Caco-2 (cell line): ENCODE measurements at regions of chr6 and their contacts with region 1.

Region 1: GRCh38 chr6:136550330-136551071 is at the start of gene MAP7:
- DNase-seq: peak; percentile 91 to 97
- H3K4me3 ChIP-seq: peak within 1 kb of the TSS; percentile 94
- H3K4me3 Mint-ChIP-seq: peak within 1 kb of the TSS; percentile 81
- H3K27ac Mint-ChIP-seq: peak within 1 kb of the TSS; percentile 83
- H3K4me1 ChIP-seq: peaks cover 8% of the 10 kb centered on the region
- H3K4me1 Mint-ChIP-seq: peaks cover 21% of the 10 kb centered on the region
- H3K27me3 ChIP-seq: no peaks in the 10 kb centered on the region
- H3K27me3 Mint-ChIP-seq: no peaks in the 10 kb centered on the region
- CTCF ChIP-seq: peak; percentile 57 to 92
- total RNA-seq, gene MAP7: 55.3 and 57.4 TPM in 2 replicates

Region 2: DNA sequence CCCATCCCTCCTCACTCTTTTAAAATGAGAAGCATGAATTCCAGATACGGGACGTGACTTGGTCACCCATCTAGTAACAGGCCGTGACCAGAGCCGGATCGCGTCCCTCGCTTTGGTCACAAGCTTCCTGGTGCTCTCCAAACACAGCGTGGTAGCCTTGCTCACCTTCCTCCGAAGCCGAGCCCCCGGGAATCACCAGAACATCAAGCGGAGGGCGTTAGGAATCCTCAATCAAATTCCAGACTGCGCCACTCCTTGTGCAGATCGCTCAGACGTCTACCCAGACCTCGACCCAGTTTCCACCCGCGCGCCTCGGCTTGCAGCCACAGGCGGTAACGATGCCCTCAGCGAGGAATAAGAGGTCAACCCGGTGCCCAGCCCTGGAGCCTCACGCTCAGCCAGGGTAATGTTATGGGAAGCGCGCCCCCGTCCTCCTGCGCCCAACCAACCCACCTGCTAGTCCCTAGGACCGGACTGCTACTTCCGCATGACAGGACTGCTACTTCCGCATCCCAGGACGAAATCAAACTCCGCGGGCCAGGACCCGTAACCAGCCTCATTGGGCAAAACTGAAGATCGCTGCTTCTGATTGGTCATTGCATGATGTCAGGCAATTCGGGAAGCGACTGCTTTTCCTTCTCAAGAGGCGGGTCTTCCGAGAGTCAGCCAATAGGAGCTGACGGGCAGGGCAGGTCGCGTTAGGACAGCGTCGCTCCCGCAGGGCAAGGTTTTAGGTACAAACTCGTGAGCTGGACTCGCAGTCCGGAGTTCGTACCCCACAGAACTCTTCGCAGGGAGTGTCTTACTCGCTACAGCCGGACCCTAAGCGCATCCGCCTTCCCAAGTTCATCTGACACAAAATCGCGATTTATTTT is 300.5 kb before region 1 on chr6 and contains the start of gene MTFR2:
- CTCF ChIA-PET with region 1: interaction called, 4 read pairs
- POLR2A ChIA-PET with region 1: interaction called, 6 read pairs
- intact Hi-C with region 1: loop called (anchors 2 kb)
- DNase-seq: peak; percentile 97 to 99
- H3K4me3 ChIP-seq: peak within 1 kb of the TSS; percentile 71
- H3K4me3 Mint-ChIP-seq: peak within 1 kb of the TSS; percentile 97
- H3K27ac Mint-ChIP-seq: peak within 1 kb of the TSS; percentile 98
- H3K4me1 ChIP-seq: peaks cover 9% of the 10 kb centered on the region; the same call in 1 of the 2 replicates
- H3K4me1 Mint-ChIP-seq: peaks cover 23% of the 10 kb centered on the region
- H3K27me3 ChIP-seq: no peaks in the 10 kb centered on the region
- H3K27me3 Mint-ChIP-seq: no peaks in the 10 kb centered on the region
- CTCF ChIP-seq: no peak
- total RNA-seq, gene MTFR2: 15.1 and 18.5 TPM in 2 replicates

Region 3: GRCh38 chr6:136317021-136317694 is 233.3 kb before region 1 on chr6:
- CTCF ChIA-PET with region 1: interaction called, 6 read pairs
- POLR2A ChIA-PET with region 1: no interaction called
- intact Hi-C with region 1: loop called (anchors 1 kb)
- DNase-seq: peak; percentile 52 to 71
- H3K4me3 ChIP-seq: no peak overlapping the region
- H3K4me3 Mint-ChIP-seq: no peak overlapping the region
- H3K27ac Mint-ChIP-seq: no peak overlapping the region
- H3K4me1 ChIP-seq: no peaks in the 10 kb centered on the region
- H3K4me1 Mint-ChIP-seq: no peaks in the 10 kb centered on the region
- H3K27me3 ChIP-seq: no peaks in the 10 kb centered on the region
- H3K27me3 Mint-ChIP-seq: no peaks in the 10 kb centered on the region
- CTCF ChIP-seq: peak; percentile 75 to 79

Region 4: GRCh38 chr6:136446579-136447182 is 103.8 kb before region 1 on chr6:
- CTCF ChIA-PET with region 1: interaction called, 5 read pairs
- POLR2A ChIA-PET with region 1: no interaction called
- intact Hi-C with region 1: loop called (anchors 10 kb)
- DNase-seq: no peak
- H3K4me3 ChIP-seq: no peak overlapping the region
- H3K4me3 Mint-ChIP-seq: no peak overlapping the region
- H3K27ac Mint-ChIP-seq: no peak overlapping the region
- H3K4me1 ChIP-seq: peaks cover 33% of the 10 kb centered on the region
- H3K4me1 Mint-ChIP-seq: peaks cover 26% of the 10 kb centered on the region
- H3K27me3 ChIP-seq: no peaks in the 10 kb centered on the region
- H3K27me3 Mint-ChIP-seq: no peaks in the 10 kb centered on the region
- CTCF ChIP-seq: no peak

Region 5: DNA sequence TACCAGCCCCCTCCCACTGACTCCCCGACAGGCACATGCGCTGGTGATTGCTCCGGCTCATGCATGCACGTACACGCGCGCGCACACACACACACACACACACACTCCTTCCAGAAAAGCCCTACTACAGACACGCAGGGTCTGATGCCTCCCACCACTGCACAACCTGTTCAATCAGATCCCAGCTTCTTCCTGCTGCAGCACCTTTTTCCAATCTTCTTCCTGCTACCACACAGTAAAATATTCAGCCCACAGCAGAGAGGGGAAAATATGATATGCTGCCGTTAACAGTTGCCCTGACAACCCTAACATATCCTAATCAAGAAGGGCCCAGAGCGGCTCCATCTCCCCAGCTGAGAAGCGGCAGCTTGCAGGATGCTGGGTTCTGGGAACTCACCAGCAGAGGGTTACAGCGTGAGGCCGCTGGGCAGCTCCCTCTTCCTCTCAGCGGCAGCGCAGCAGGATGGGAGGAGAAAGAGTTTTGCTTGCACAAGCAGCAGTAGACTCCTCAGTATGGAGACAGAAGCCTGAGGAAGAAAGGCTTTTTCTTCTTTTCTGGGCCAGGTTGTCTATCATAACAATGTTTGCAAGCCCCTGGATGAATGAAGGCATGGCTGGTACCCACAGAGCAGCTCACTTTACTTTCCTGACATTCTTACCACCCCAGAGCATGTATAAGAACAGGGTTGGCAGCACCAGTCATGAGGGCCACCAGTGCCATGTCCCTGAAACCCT is 24.1 kb before region 1 on chr6:
- CTCF ChIA-PET with region 1: interaction called, 12 read pairs
- POLR2A ChIA-PET with region 1: no interaction called
- intact Hi-C with region 1: no loop called
- DNase-seq: peak; percentile 37 to 49
- H3K4me3 ChIP-seq: no peak overlapping the region
- H3K4me3 Mint-ChIP-seq: no peak overlapping the region
- H3K27ac Mint-ChIP-seq: peak overlapping the region; percentile 13
- H3K4me1 ChIP-seq: peaks cover 9% of the 10 kb centered on the region
- H3K4me1 Mint-ChIP-seq: peaks cover 18% of the 10 kb centered on the region
- H3K27me3 ChIP-seq: no peaks in the 10 kb centered on the region
- H3K27me3 Mint-ChIP-seq: no peaks in the 10 kb centered on the region
- CTCF ChIP-seq: peak in 1 of 2 experiments; percentile 42

Region 6: DNA sequence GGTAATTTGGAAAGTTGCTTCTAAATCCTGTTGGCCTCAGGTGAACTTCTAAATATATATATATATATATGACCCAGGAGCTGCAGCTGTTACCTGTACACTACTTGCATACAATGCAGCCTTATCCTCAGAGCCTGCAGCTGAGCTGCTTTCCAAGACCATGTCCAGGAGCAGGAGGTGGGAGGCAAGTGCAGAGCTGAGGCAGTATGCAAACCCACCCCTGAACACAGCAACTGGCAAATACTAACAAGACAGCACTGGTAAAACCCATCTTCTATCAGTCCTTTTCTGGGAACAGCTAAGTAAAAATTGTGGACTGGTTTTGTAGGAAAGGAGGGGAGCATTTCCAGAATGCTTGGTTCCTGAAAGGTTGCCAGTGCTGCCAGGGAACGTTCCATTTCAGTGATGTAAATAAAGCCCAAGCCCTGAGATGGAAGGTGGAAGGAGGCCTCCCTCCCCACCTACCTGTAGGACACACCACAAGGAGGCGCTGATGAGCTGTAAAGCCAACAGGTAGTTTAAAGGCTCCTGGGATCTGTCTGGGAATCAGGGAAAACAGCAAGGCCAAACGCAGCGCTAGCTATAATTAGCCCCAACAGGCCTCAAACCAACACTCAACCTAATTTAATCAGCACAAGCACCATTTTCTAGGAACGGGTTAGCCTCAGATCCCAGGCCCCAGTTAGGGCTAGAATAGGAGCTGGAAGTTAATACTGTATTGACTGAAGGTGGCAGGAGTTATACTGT is 93.5 kb after region 1 on chr6:
- CTCF ChIA-PET with region 1: no interaction called
- POLR2A ChIA-PET with region 1: no interaction called
- intact Hi-C with region 1: no loop called
- DNase-seq: peak; percentile 83 to 87
- H3K4me3 ChIP-seq: no peak overlapping the region
- H3K4me3 Mint-ChIP-seq: no peak overlapping the region
- H3K27ac Mint-ChIP-seq: no peak overlapping the region
- H3K4me1 ChIP-seq: peaks cover 5% of the 10 kb centered on the region; the same call in 1 of the 2 replicates
- H3K4me1 Mint-ChIP-seq: no peaks in the 10 kb centered on the region
- H3K27me3 ChIP-seq: no peaks in the 10 kb centered on the region
- H3K27me3 Mint-ChIP-seq: no peaks in the 10 kb centered on the region
- CTCF ChIP-seq: peak; percentile 85 to 93